Heart left ventricle (tissue), 16 donors: ENCODE measurements at regions of chr22 and their contacts with region 1.

Region 1: DNA sequence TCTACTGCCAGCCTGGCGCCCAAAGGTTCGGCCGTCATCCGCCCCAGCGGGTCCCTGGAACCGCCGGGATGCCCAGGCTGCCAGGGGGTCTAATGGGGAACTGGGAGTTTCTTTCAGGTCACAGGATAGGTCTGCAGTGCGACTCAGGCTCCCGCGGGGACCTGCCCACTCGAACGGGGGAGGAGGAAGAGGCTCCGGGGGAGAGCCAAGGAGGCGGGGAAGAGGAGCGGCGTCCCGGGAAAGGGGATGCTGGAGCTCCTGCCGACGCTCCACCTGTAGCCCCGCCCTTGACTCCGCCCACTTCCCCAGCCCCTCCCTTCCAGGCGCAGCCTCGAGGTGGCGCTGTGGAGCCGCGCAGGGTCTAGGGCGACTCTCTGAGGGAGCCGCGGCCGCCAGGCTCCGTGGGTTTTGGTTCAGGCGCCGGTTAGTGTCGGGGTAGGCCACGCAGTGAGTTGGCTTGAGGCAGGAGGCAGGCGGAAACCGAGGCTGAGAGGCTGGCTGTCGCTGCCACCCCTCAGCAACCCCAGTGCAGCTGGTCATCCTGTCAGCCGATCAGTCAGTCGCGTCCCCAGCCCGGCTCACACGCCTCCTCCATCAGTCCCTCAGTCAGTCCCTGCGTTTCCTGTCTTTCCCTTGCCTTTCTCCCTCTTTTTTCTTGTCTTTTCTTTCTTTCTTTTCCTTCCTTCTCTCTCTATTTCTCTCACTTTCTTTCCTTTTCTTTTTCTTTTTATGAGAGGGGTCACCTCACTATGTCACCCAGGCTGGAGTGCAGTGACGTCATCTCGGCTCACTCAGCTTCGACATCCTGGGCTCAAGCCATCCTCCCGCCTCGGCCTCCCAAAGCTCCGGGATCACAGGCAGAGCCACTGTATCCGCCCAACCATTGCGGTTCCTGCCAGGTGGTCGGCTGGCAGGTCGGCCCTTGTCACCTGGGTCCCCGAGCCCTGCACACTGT is 26.4 kb downstream of the YWHAH start:
- DNase-seq: peak; percentile 78 to 92 (median 79)
- ATAC-seq: peak; percentile 92 to 97 (median 94)
- H3K4me3 ChIP-seq: peak overlapping the region in 11 of 12 donors; percentile 21 to 63 (median 47)
- H3K27ac ChIP-seq: peak overlapping the region in 1 of 12 donors; percentile 16
- H3K4me1 ChIP-seq: peaks cover 0 to 13% (median 7%) of the 10 kb centered on the region in 12 donors
- H3K27me3 ChIP-seq: no peaks in the 10 kb centered on the region
- CTCF ChIP-seq: peak; percentile 88 to 97 (median 94)
- POLR2A ChIP-seq: no peak

Region 2: DNA sequence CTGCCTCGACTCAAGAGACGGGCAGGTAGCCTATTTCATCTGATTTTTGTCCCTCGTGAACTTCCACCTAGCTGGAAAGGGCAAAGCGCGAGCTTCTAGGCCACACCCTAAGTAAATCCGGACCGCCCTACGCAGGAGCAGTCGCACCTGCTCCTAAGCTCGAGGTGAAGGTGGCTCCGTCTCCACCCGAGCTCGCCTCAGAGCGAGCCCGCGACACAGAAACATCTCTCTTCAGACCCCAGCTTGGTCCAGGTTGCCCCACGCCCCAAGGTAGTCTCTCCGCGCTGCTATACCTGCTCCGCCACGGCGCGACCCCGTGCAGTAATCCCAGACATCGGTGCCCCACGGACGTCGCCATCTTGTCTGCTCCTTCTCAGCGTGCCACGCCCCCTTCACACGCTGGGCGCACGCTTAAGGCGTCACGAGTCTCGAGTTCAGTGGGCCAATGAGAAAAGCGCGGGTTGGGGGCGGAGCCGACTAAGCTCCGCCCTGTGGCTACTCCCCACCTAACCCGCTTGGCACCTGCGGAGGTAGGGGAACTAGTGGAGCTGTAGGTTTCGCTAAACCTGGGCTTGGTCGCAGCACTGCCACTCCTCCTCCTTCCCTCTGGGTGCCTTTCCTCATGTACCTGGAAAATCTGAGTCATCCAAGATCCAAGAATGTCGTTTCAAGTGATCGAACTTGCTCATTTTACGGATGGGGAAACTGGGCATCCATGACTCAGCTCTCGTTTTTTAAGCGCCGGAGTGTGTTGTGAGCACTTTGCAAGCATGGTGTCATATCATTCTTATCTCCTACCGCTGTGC is 308.7 kb before region 1 on chr22 and contains the start of gene PISD:
- intact Hi-C with region 1: loop called in 2 of 10 experiments (anchors 10 kb)
- DNase-seq: peak; percentile 94 to 97 (median 96)
- ATAC-seq: peak; percentile 98 to 100 (median 100)
- H3K4me3 ChIP-seq: peak within 1 kb of the TSS; percentile 33 to 100 (median 86)
- H3K27ac ChIP-seq: peak within 1 kb of the TSS in 10 of 12 donors; percentile 34 to 81 (median 54)
- H3K4me1 ChIP-seq: peaks cover 0 to 21% (median 13%) of the 10 kb centered on the region in 12 donors
- H3K27me3 ChIP-seq: no peaks in the 10 kb centered on the region
- CTCF ChIP-seq: no peak
- POLR2A ChIP-seq: peak in 1 of 2 donors; percentile 58
- total RNA-seq, gene PISD: 13.1 to 38.1 (median 17.0) TPM

Region 3: GRCh38 chr22:32202539-32203180 is 231.9 kb after region 1 on chr22:
- intact Hi-C with region 1: loop called in 7 of 10 experiments (anchors 5 to 10 kb)
- DNase-seq: peak in 3 of 5 donors; percentile 33 to 57 (median 53)
- ATAC-seq: peak; percentile 63 to 77 (median 73)
- H3K4me3 ChIP-seq: peak overlapping the region in 10 of 12 donors; percentile 0 to 43 (median 27)
- H3K27ac ChIP-seq: no peak overlapping the region
- H3K4me1 ChIP-seq: peaks cover 0 to 22% (median 0%) of the 10 kb centered on the region in 12 donors
- H3K27me3 ChIP-seq: peaks cover 0 to 31% (median 13%) of the 10 kb centered on the region in 9 donors
- CTCF ChIP-seq: peak in 11 of 12 donors; percentile 23 to 56 (median 44)
- POLR2A ChIP-seq: no peak

Region 4: GRCh38 chr22:32378707-32379272 is 408.0 kb after region 1 on chr22:
- intact Hi-C with region 1: loop called in 1 of 10 experiments (anchors 10 kb)
- DNase-seq: no peak
- ATAC-seq: peak in 3 of 4 donors; percentile 48 to 61 (median 60)
- H3K4me3 ChIP-seq: no peak overlapping the region
- H3K27ac ChIP-seq: no peak overlapping the region
- H3K4me1 ChIP-seq: no peaks in the 10 kb centered on the region
- H3K27me3 ChIP-seq: no peaks in the 10 kb centered on the region
- CTCF ChIP-seq: peak in 11 of 12 donors; percentile 19 to 63 (median 39)
- POLR2A ChIP-seq: no peak